Colonic mucosa (tissue), 4 donors: ENCODE measurements at regions of chr7 and their contacts with region 1.

Region 1: DNA sequence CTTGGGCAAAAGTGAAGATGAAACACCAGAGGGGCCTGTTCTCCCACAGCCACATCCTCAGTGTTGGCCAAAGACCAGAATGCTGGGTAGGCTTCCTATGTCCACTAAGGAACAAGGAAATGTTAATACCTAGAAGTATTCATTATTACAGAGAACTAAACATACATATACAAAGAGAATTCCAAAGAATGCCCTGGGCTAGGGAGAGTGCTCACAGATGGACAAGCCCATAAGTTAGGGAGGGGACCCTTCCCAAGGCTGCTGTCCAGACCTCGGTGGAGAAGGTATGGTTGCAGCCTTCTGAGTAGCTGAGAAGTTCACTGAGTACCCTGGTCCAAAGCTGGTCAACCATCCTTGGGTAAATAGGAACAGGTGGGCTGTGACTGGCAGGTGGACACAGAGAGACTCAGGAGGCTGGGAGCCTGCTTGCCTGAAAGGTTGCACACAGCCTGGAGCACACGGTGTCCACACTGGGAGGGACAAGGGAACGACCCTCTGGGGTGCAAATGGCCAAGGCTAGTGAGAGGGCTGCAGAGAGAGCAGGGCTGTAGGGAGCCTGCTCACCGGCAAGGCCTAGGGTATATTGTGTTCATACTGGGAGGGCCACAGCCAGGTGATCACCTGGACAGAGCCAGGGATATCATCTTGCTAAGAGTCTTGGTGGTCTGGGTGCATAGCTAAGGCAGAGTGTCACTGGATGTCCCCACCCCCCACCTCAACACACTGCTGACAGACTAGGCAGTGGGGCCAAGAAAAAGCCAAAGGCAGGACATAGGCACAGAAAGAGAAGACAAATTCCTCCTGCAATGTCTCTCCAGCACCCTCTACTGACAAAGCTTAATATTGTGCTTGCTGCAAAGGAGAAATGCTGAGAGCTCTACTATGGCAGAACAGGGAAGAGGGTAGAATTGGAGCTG is 40.3 kb downstream of the CPVL start:
- DNase-seq: peak; percentile 57
- H3K4me3 ChIP-seq: no peak overlapping the region
- H3K27ac ChIP-seq: no peak overlapping the region
- H3K4me1 ChIP-seq: no peaks in the 10 kb centered on the region
- H3K27me3 ChIP-seq: no peaks in the 10 kb centered on the region
- CTCF ChIP-seq: peak; percentile 73

Region 2: GRCh38 chr7:28921822-28922221 is 184.2 kb before region 1 on chr7:
- intact Hi-C with region 1: loop called (anchors 2 kb)
- DNase-seq: peak; percentile 59
- H3K4me3 ChIP-seq: no peak overlapping the region
- H3K27ac ChIP-seq: no peak overlapping the region
- H3K4me1 ChIP-seq: no peaks in the 10 kb centered on the region
- H3K27me3 ChIP-seq: no peaks in the 10 kb centered on the region
- CTCF ChIP-seq: peak; percentile 82

Region 3: DNA sequence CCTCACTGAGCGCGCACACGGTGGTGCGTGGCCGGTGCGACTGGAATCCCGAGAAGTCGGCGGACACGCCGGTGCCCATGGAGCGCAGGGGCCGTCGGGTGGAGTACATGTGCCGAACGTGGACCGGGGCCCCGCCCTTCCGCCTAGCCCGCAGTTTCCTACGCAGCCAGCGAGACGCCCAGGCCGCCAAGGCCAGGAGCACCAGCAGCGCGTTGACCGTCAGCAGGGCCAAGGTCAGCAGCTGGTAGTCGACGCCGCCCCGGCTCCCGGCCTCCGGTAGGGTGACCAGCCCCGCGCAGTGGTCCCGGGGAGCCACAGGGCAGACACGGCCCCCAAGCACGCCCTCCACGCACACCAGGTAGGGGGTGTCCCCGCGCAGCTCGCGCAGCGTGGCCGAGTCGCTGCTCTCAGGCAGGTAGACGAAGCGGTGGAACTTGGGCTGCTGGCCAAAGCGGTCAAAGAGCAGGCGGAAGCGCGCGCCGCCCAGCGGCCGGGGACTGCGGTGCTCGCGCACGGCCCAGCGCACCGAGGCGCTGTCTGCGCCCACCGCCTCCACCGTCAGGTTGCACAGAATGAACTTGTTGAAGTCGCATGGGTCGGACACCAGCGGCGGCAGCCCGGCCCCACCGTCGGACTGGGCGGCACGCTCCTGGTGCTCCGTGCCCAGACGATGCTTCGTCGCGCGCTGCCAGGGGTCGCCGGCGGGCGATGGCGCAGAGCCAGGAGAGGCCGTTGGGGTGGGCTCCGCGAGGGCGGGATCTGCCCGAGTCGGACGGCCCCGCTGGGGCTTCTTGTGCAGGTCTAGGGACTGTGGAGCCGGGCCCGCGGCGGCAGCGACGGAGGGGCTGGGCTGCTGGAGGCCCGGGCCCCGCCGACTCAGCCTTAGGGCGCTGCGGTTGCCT is 150.0 kb before region 1 on chr7:
- intact Hi-C with region 1: loop called (anchors 2 kb)
- DNase-seq: peak; percentile 90
- H3K4me3 ChIP-seq: peak overlapping the region; percentile 63
- H3K27ac ChIP-seq: peak overlapping the region; percentile 7
- H3K4me1 ChIP-seq: peaks cover 6% of the 10 kb centered on the region
- H3K27me3 ChIP-seq: peaks cover 28% of the 10 kb centered on the region
- CTCF ChIP-seq: peak; percentile 39

Region 4: GRCh38 chr7:29140873-29141468 is 35.0 kb after region 1 on chr7:
- intact Hi-C with region 1: no loop called
- DNase-seq: peak; percentile 60
- H3K4me3 ChIP-seq: no peak overlapping the region
- H3K27ac ChIP-seq: no peak overlapping the region
- H3K4me1 ChIP-seq: no peaks in the 10 kb centered on the region
- H3K27me3 ChIP-seq: no peaks in the 10 kb centered on the region
- CTCF ChIP-seq: no peak

Region 5: DNA sequence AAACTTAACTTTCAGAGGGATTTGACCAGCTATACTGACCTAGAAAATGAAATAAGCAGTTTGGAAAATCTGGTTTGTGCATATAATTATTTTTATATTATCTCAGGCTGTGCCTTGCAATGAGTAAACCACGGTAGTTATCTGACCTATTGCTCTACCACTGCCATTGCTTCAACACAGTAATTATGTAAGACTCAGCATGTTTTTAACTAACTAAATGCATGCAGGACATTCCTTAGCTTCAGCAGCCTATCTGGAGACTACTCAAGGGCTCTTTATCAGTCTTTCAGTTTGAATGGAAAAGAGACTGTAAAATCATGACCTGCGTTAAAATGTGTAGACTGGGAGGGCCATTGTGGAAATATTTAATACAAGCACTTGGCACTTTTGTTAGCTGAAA is 111.1 kb after region 1 on chr7:
- intact Hi-C with region 1: no loop called
- DNase-seq: no peak
- H3K4me3 ChIP-seq: no peak overlapping the region
- H3K27ac ChIP-seq: no peak overlapping the region
- H3K4me1 ChIP-seq: no peaks in the 10 kb centered on the region
- H3K27me3 ChIP-seq: no peaks in the 10 kb centered on the region
- CTCF ChIP-seq: no peak